ENCODE measurements at regions of chr13 and their contacts with region 1.

Region 1: DNA sequence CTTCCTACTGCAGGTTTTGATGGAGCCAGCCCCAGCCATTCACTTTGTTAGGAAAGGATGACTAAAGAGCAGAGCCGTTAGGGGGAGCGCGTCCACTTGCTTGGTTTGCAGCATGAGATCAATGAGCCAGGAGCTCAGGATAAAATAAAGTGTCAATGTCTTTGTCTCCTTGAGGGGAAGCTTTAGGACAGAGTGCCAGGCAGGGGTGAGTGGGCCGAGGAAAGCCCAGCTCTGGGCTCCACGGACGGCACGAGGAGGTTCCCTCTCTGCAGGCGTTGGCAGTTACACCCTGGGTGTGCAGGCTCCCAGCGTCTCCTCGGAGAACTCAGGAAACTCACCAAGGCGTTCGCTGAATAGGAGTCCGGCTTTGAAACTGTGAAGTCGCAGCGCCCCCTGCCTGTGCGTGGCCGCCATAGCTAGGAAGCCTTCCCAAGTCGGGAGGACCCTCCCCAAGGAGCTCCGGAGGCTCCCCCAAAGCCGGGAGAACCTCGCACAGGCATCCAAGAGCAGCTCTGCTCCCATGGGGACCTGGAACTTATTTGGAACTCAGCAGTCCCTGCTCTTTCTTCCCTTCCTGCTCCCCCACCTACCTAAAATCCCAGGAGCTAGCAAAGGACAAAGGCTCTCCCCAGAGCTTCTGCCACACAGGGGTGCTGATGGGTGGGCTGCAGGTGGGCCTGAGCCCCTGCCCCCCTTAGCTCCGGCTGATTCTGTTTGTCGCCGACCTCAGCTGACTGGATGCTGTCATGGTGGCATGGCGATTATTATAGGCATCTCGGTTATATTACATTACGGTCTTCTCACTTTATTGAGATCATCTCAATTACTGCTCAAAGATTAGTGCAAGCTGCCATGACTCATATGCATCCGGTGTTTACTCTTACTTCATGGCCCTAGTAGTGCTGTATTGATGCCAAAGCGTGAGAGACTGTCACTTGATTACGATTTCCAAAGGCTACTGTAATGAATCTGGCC is 34.4 kb downstream of the GSX1 start:
- DNase-seq: peak; percentile 74
- H3K27ac ChIP-seq: no peak overlapping the region
- CTCF ChIP-seq: peak; percentile 86

Region 2: DNA sequence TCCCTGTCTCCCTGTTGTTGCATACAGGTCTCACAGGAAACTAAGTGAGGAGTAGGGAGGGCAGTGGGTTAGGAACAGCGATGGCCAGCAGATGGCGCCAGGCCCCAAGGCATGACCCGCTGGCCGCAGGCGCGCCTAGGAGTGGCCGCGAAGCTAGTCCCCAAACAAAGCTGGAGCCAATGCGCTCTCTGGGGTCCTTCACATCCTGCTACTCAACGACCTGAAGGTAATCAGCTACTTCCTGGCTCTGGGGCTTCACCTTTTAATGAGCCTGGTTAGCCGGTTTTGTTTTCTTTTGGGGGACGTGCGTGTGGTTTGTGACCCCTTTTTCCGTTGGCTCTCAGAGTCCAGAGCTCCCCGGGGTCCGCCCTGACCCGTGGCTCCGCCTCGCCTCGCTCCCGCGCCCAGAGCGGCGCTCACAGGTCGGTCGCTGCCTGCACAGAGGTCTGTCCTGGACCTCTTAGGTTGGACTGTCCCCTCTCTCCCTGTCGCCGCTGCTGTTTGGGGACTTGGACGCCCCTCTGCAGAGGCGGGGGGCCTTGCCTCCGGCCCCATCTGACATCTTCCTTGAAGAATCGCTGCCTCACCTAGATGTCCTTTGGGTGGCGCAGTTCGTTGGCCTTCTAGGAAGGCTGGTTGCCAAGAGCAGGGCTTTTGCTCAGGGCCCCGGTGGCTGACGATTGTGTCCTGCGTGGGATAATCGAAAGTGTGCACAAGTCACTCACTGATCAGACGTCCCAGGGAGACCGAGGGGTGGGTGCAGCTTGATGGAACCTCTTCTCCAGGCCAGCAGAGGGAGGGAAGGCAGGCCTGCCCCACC is 464.4 kb before region 1 on chr13:
- CTCF ChIA-PET with region 1: interaction called, 35 read pairs
- POLR2A ChIA-PET with region 1: no interaction called
- DNase-seq: peak; percentile 87
- H3K27ac ChIP-seq: no peak overlapping the region
- CTCF ChIP-seq: peak; percentile 86

Region 3: DNA sequence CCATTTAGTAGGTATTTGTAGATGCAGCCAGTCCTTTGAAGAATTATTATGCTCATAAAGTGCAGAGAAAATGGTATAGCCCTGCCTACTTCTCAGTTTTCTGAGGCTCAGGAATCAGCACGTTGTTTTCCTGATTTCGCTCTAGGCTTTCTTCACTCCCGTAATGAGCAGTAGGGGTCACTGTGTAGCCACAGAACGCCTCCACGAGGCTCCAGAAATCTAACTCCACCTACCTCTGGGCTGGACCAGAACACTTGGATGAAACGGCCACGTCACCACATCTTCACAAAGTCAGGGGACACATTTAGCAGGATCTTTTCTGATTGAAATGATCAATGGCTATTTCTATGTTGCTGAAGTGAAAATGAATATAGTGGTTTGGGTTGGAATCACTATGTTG is 452.0 kb before region 1 on chr13:
- CTCF ChIA-PET with region 1: interaction called, 16 read pairs
- POLR2A ChIA-PET with region 1: no interaction called
- DNase-seq: peak; percentile 79
- H3K27ac ChIP-seq: no peak overlapping the region
- CTCF ChIP-seq: peak; percentile 63

Region 4: DNA sequence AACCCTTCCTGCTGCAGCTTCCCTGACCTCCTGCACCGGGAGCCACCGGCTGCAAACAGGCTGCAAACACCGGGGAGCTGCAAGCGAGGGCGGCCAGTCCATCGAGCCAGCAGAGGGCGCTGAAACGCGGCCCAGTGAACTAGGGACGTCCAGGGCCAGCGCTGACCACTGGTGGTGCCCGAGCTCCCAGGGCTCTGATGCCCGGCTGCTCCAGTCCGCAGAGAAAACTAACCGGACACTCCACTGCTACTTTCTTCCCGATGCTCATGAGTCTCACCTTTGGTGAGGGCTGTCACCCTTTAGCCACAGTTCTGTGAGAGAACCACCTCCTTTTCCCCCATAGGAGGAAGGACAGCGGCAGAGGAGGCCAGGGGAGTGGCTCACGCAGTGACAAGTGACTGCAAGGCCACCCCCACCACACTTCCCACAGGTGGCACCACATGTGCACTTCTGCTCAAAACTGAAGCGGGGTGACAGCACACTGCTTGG is 293.5 kb before region 1 on chr13:
- CTCF ChIA-PET with region 1: interaction called, 22 read pairs
- POLR2A ChIA-PET with region 1: no interaction called
- DNase-seq: peak; percentile 60
- H3K27ac ChIP-seq: no peak overlapping the region
- CTCF ChIP-seq: peak; percentile 85

Region 5: GRCh38 chr13:27770809-27771208 is 55.9 kb before region 1 on chr13:
- CTCF ChIA-PET with region 1: interaction called, 23 read pairs
- POLR2A ChIA-PET with region 1: no interaction called
- DNase-seq: peak; percentile 53
- H3K27ac ChIP-seq: no peak overlapping the region
- CTCF ChIP-seq: peak; percentile 19; the same call in 1 of the 2 replicates

Region 6: DNA sequence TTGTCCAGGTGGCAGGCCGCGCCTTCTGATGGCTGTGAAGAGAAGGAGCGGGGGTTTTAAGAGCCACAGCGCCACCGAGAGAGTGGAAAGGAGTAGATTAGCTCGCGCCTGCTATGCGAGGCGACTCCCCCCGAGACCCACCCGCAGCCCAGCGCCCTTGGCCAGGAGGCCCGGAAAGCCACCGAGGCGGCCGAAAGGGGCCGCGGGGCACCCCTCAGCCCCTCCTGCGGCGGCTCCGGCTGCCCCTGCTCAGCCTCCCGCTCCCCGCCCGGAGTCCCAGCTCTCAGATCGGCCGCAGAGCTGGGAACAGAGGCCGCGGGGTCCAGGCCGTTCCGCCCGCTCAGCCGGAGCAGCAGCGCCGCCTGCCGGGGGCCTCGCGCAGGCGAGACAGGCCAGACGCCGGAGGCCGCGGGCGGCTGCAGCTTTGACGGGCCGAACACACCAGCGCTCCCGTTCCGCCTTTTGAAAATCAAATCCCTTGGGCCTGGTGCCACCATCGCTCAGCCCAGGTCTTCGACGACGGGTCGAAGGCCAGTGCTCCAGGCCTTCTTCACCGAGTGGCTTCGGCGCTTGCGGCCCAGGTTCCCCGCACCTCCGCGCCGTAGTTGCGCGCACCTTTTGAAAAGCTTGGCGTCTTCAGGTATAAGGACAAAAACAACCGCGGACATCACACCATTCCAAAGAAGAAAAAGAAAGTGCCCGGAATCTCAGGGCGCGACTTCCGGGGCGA is 127.2 kb after region 1 on chr13:
- CTCF ChIA-PET with region 1: interaction called, 20 read pairs
- POLR2A ChIA-PET with region 1: no interaction called
- DNase-seq: peak; percentile 64
- H3K27ac ChIP-seq: 0 out of 2 replicates have a peak overlapping the region, but pooled peaks have one; percentile 15
- CTCF ChIP-seq: peak; percentile 79

Region 7: GRCh38 chr13:27985600-27985999 is 158.9 kb after region 1 on chr13:
- CTCF ChIA-PET with region 1: interaction called, 24 read pairs
- POLR2A ChIA-PET with region 1: no interaction called
- DNase-seq: no peak
- H3K27ac ChIP-seq: no peak overlapping the region
- CTCF ChIP-seq: no peak